ENCODE measurements at regions of chr12 and their contacts with region 1.

Region 1: GRCh38 chr12:112906712-112907414 is at the start of gene OAS1:
- DNase-seq: peak; percentile 75
- H3K4me3 ChIP-seq: peak within 1 kb of the TSS in 1 of 3 experiments; percentile 36
- H3K27ac ChIP-seq: no peak within 1 kb of the TSS
- H3K4me1 ChIP-seq: peaks cover 48% of the 10 kb centered on the region
- H3K27me3 ChIP-seq: no peaks in the 10 kb centered on the region
- CTCF ChIP-seq: no peak
- POLR2A ChIP-seq: peak; percentile 43
- total RNA-seq, gene OAS1: 2.9 and 6.4 TPM in 2 replicates

Region 2: DNA sequence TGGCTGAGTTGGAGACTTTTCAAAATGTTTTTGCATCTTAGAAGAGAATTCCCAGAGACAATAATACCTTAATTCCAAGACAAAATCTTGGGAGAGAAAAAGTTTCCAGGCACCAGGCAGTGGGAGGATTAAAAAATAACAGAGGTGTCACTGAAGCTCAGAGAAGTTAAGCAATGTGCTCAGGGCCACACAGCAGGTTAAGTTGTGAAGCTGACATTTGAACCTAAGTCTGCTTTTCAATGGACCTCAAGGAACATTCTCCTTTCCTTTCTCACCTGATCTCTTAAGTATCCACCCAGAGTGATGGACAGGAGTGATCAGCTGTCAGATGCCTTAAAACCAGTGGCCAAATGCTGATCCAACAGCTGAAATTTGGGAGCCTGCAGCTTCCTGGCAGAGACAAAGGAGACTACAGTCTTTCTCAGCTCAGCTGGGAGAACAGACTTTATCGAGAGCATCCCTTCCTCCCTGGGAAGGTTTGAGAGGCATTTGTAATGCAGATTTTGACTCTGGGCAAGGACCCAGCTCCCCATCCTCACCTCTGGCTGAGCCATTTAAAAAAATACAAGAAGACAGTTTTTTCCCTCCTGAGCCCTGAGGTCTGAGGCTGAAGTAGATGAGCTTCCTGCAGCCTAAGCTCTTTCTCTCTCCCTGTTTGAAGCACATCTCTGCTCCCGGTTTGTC is 290.3 kb before region 1 on chr12:
- CTCF ChIA-PET with region 1: no interaction called
- POLR2A ChIA-PET with region 1: no interaction called
- dilution Hi-C with region 1: no loop called
- intact Hi-C with region 1: no loop called
- DNase-seq: no peak
- H3K4me3 ChIP-seq: no peak overlapping the region
- H3K27ac ChIP-seq: no peak overlapping the region
- H3K4me1 ChIP-seq: no peaks in the 10 kb centered on the region
- H3K27me3 ChIP-seq: no peaks in the 10 kb centered on the region
- CTCF ChIP-seq: no peak
- POLR2A ChIP-seq: no peak

Region 3: GRCh38 chr12:112837629-112838197 is 69.2 kb before region 1 on chr12:
- CTCF ChIA-PET with region 1: no interaction called
- POLR2A ChIA-PET with region 1: no interaction called
- dilution Hi-C with region 1: no loop called
- intact Hi-C with region 1: loop called (anchors 1 kb)
- DNase-seq: peak; percentile 42
- H3K4me3 ChIP-seq: no peak overlapping the region
- H3K27ac ChIP-seq: peak overlapping the region; percentile 94
- H3K4me1 ChIP-seq: peaks cover 43% of the 10 kb centered on the region
- H3K27me3 ChIP-seq: no peaks in the 10 kb centered on the region
- CTCF ChIP-seq: no peak
- POLR2A ChIP-seq: no peak

Region 4: GRCh38 chr12:112937741-112938719 is 31.2 kb after region 1 on chr12 and contains the start of gene OAS3:
- CTCF ChIA-PET with region 1: interaction called, 3 read pairs
- POLR2A ChIA-PET with region 1: no interaction called
- dilution Hi-C with region 1: no loop called
- intact Hi-C with region 1: loop called (anchors 1 kb)
- DNase-seq: peak; percentile 57
- H3K4me3 ChIP-seq: peak within 1 kb of the TSS; percentile 45 to 68 (median 57)
- H3K27ac ChIP-seq: no peak within 1 kb of the TSS
- H3K4me1 ChIP-seq: peaks cover 5% of the 10 kb centered on the region
- H3K27me3 ChIP-seq: no peaks in the 10 kb centered on the region
- CTCF ChIP-seq: no peak
- POLR2A ChIP-seq: no peak
- total RNA-seq, gene OAS3: 15.9 and 19.8 TPM in 2 replicates

Measured in endothelial cell of umbilical vein (primary cell).